Activated CD8-positive, alpha-beta T cell treated with anti-CD3 and anti-CD28 coated beads for 36 hours (primary cell): ENCODE measurements at regions of chr6 and their contacts with region 1.

Region 1: DNA sequence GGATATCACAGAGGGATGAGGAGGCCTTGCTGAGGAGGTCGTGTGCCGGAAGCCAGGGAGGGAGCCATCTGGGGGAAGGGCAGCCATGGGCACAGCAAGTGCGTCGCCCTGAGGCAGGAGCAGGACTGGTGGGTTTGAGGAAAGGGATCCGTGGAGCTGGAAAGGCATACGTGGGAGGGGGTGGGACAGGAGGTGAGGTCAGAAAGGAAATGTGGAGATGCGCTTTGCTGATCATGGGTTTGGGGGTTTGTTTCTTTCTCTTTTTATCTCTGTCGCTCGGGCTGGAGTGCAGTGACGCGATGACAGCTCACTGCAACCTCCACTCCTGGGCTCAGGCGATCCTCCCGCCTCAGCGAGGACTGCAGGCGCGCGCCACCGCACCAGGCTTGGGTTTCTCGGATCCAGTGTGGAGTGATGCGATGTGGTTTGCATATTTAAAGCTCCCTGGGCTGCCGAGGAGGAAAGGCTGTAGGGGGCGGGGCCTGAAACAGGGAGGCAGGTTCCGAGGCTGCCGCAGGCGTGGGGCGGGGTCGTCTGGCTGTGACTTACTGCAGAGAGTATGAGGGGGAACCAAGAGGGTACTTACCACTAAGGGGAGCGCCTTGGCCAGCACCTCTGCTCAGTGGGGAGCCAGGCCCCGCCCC is 12.5 kb upstream of the BAK1 start:
- DNase-seq: peak; percentile 55
- ATAC-seq: peak; percentile 18
- H3K4me3 Mint-ChIP-seq: peak overlapping the region; percentile 61
- H3K27ac Mint-ChIP-seq: peak overlapping the region; percentile 10
- H3K4me1 Mint-ChIP-seq: peaks cover 36% of the 10 kb centered on the region
- H3K27me3 Mint-ChIP-seq: no peaks in the 10 kb centered on the region
- CTCF ChIP-seq: no peak

Region 2: DNA sequence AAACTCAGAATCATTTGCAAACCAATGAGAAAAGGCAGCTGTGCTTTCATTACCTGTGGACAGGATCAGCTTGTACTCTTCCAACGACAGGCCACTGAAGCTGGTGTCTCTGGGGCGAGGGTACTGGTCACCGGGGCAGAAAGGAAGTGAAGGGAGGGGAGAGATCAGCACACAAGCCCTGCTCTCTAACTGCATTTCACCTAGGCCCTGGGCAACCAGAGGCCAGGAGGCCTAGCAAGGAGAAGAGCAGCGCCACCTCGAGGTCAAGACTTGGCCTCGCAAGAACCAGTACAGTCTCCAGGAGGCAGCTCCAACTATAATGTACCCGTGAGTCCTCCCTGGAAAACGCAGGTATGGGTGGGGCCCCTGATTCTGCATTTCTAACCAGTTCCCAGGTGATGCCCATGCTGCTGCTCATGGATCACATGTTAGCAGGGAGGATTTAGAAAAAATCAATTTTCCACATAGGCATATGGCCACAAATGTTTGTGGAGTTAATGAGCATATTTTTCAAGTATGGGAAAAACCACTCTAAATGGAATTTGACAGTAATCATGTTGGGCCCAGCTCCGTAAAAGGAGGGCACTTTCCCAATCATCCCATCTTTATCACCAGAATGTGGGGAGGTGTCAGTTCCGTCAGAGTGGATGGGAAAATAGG is 108.0 kb after region 1 on chr6:
- CTCF ChIA-PET with region 1: interaction called, 31 read pairs
- POLR2A ChIA-PET with region 1: no interaction called
- intact Hi-C with region 1: no loop called
- DNase-seq: peak; percentile 86
- ATAC-seq: peak; percentile 87
- H3K4me3 Mint-ChIP-seq: no peak overlapping the region
- H3K27ac Mint-ChIP-seq: peak overlapping the region; percentile 37
- H3K4me1 Mint-ChIP-seq: peaks cover 35% of the 10 kb centered on the region
- H3K27me3 Mint-ChIP-seq: no peaks in the 10 kb centered on the region
- CTCF ChIP-seq: peak; percentile 82